Activated CD4-positive, alpha-beta T cell treated with anti-CD3 and anti-CD28 coated beads for 36 hours (primary cell): ENCODE measurements at regions of chr9 and their contacts with region 1.

Region 1: GRCh38 chr9:128203024-128203706 is at the start of gene DNM1:
- DNase-seq: peak; percentile 83
- ATAC-seq: peak; percentile 95
- H3K4me3 Mint-ChIP-seq: peak within 1 kb of the TSS; percentile 39
- H3K27ac Mint-ChIP-seq: peak within 1 kb of the TSS; percentile 66
- H3K4me1 Mint-ChIP-seq: peaks cover 12% of the 10 kb centered on the region
- H3K27me3 Mint-ChIP-seq: peaks cover 11% of the 10 kb centered on the region
- total RNA-seq, gene DNM1: 0.50 to 0.72 TPM

Region 2: GRCh38 chr9:128191406-128192046 is 11.6 kb before region 1 on chr9 and contains the start of gene CIZ1:
- CTCF ChIA-PET with region 1: interaction called, 7 read pairs
- POLR2A ChIA-PET with region 1: interaction called, 5 read pairs
- intact Hi-C with region 1: loop called in 1 of 2 experiments (anchors 1 kb)
- DNase-seq: peak; percentile 84
- ATAC-seq: peak; percentile 82
- H3K4me3 Mint-ChIP-seq: peak within 1 kb of the TSS; percentile 87
- H3K27ac Mint-ChIP-seq: peak within 1 kb of the TSS; percentile 85
- H3K4me1 Mint-ChIP-seq: peaks cover 28% of the 10 kb centered on the region
- H3K27me3 Mint-ChIP-seq: no peaks in the 10 kb centered on the region
- total RNA-seq, gene CIZ1: 79.5 to 110 TPM

Region 3: DNA sequence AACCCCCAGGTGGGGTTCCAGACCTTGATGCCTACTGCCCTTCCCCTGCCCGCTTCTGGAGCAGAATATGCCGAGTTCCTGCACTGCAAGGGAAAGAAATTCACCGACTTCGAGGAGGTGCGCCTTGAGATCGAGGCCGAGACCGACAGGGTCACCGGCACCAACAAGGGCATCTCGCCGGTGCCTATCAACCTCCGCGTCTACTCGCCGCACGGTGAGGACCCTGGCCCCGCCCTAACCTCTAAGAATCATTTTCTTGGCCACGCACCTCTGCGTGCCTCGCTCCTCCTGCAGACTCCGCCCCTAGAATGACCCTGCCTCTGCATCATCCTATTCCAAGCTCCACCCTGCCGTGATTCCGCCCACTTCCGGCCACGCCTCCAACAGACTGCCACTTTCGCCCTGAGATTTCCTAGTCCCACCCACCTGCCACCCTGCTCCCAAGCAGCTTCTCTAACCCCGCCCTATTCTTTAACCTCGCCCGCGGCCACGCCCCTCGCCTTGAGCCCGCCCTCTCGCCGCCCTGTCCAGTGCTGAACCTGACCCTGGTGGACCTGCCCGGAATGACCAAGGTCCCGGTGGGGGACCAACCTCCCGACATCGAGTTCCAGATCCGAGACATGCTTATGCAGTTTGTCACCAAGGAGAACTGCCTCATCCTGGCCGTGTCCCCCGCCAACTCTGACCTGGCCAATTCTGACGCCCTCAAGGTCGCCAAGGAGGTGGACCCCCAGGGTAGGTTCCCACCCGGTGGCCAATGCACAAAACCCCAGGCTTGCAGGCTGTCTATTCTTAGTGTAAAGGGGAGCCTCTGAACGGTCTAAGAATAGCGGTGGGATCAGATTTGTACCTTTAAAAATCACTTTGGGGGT is 15.6 kb after region 1 on chr9:
- CTCF ChIA-PET with region 1: interaction called, 6 read pairs
- POLR2A ChIA-PET with region 1: no interaction called
- intact Hi-C with region 1: loop called (anchors 1 kb)
- DNase-seq: peak; percentile 97
- ATAC-seq: peak; percentile 98
- H3K4me3 Mint-ChIP-seq: peak overlapping the region; percentile 71
- H3K27ac Mint-ChIP-seq: peak overlapping the region; percentile 74
- H3K4me1 Mint-ChIP-seq: peaks cover 11% of the 10 kb centered on the region
- H3K27me3 Mint-ChIP-seq: no peaks in the 10 kb centered on the region